ENCODE measurements at regions of chr7 and their contacts with region 1.

Region 1: GRCh38 chr7:130292682-130293257 is at the start of gene CPA4:
- DNase-seq: peak; percentile 100
- H3K4me3 ChIP-seq: peak within 1 kb of the TSS; percentile 46
- CTCF ChIP-seq: no peak

Region 2: GRCh38 chr7:130277763-130278643 is 14.8 kb before region 1 on chr7:
- CTCF ChIA-PET with region 1: interaction called, 47 read pairs
- POLR2A ChIA-PET with region 1: interaction called, 9 read pairs
- DNase-seq: no peak
- H3K4me3 ChIP-seq: no peak overlapping the region
- CTCF ChIP-seq: peak; percentile 38

Region 3: GRCh38 chr7:130454959-130455358 is 162.2 kb after region 1 on chr7:
- CTCF ChIA-PET with region 1: no interaction called
- POLR2A ChIA-PET with region 1: no interaction called
- DNase-seq: no peak
- H3K4me3 ChIP-seq: no peak overlapping the region
- CTCF ChIP-seq: no peak

Region 4: GRCh38 chr7:130789436-130789835 is 496.7 kb after region 1 on chr7:
- CTCF ChIA-PET with region 1: no interaction called
- POLR2A ChIA-PET with region 1: no interaction called
- DNase-seq: no peak
- H3K4me3 ChIP-seq: no peak overlapping the region
- CTCF ChIP-seq: no peak

Measured in AG04449 (cell line).